ENCODE measurements at regions of chr10 and their contacts with region 1.

Region 1: DNA sequence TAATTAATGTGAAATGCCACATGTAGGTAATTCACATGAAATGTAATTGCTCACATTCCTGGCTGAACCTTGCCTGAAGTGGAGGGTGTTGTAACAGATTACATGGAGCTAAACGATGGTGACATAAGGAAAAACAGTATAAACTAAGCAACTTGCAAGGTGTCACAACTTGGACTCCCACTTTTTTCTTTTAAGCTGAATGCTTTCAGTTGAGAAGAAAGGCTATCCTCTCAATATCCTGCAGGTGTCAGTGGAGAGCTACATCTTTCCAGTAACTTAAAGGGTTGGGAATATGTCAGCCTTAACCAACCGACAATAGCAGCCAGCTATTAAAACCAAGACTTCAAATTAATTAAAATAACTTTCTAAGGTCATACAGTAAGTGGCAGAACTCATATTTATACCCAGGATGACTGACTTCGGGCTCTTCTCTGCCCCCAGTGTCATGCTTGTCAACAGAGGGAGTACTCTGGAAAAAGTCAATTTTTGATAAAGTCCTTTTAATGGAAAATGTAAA is 33.7 kb downstream of the NRBF2 start:
- DNase-seq: peak; percentile 28
- H3K4me3 ChIP-seq: no peak overlapping the region
- CTCF ChIP-seq: peak; percentile 62

Region 2: DNA sequence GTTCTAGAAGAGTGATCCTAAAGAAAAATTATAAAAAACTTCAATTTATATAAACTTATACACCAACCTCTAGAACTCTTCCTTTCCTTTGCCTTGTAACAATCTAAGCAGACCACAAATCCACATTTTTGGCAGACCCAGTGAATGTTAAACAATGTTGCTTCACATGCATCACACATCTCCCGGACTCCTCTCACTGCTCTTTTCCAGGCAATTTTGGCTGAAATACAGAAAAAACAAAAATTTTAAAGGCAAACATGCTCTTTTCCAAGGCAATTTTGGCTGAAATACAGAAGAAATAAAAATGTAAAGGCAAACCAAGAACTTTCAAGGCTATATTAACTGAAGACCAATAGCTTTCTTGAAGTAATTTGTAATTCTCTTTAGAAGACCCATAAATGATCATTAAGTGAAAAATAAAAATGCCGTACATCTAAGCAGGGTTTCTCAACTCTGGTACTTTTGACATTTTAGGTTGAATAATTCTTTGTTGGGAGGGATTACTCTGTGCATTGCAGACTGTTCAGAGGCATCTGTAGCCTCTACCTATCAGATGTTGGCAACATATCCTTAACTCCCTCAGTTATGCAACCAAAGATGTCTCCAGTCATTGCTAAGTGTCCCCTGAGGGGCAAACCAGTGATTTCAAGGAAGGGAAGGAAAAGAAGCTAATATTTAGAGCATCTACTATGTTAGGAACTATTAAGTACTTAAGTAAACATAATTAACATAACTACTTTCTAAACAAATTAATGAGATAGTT is 30.7 kb after region 1 on chr10:
- CTCF ChIA-PET with region 1: interaction called, 11 read pairs
- POLR2A ChIA-PET with region 1: no interaction called
- DNase-seq: peak; percentile 70
- H3K4me3 ChIP-seq: no peak overlapping the region
- CTCF ChIP-seq: no peak

Region 3: GRCh38 chr10:63700209-63700613 is 533.4 kb after region 1 on chr10:
- CTCF ChIA-PET with region 1: interaction called, 11 read pairs
- POLR2A ChIA-PET with region 1: no interaction called
- DNase-seq: peak; percentile 95
- H3K4me3 ChIP-seq: no peak overlapping the region; the same call in 1 of the 2 replicates
- CTCF ChIP-seq: no peak

Region 4: DNA sequence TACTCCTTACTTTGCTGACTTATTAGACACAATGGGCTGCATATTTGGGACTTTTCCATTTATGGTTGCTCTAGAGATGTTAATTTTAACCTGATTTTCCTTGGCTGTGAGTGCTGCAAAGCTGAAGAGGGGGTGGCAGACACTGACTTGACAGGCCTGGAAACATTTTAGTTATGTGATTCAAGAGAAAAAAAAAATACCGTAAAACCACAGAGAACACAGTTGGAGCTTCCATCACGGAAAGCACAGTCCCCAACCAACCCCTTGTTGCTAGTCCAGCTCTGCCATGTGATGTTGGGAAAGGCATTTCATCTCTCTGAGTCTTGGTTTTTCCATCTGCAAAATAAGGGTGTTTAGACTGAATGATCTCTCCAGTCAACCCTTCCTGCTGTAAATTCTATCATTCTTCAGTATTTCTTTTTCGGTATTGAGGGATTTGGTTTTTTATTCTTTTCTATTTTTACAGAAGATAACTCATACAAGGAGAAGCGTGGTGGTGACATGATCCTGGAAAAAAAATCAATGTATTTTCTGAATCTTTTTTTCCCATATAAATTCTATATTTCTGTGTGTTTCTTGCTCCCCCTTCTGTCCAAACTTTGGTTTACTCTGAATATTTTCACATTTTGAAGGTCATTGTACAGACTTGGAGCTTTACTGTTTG is 600.5 kb after region 1 on chr10:
- CTCF ChIA-PET with region 1: interaction called, 44 read pairs
- POLR2A ChIA-PET with region 1: no interaction called
- DNase-seq: peak; percentile 46
- H3K4me3 ChIP-seq: no peak overlapping the region
- CTCF ChIP-seq: peak; percentile 21

Region 5: DNA sequence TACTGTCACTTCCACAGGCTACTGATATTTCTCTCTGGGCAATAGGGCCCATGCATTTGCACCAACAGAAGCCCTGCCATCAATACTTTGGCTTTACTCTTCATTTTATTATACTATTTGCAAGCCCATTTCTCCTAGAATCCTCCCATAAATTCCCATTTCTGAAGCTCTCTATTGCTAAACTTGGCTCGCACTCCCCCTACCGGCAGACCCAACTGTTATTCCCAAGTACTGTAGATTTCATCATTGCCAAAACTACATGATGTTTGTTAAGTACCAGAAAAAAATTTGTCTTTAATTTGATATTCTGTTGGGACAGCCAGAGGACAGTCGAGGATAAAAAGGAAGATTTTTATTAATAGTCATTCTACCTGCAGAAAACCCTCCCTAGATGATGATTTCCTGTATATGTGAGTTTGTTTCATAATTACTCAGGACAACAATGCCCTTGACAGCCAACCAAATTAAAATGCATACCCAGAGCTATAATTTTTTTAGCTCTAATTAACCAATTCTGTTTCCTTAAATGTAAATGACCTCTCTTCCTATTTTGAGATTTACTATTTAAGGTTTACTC is 653.0 kb after region 1 on chr10:
- CTCF ChIA-PET with region 1: interaction called, 23 read pairs
- POLR2A ChIA-PET with region 1: no interaction called
- DNase-seq: peak; percentile 12
- H3K4me3 ChIP-seq: no peak overlapping the region
- CTCF ChIP-seq: peak; percentile 73